ENCODE measurements at regions of chr18 and their contacts with region 1.

Region 1: GRCh38 chr18:23586249-23587196 is at the start of gene NPC1:
- DNase-seq: peak; percentile 92
- H3K4me3 Mint-ChIP-seq: peak within 1 kb of the TSS; percentile 94
- H3K27ac Mint-ChIP-seq: peak within 1 kb of the TSS; percentile 93
- H3K4me1 Mint-ChIP-seq: peaks cover 42% of the 10 kb centered on the region
- H3K27me3 Mint-ChIP-seq: peaks cover 3% of the 10 kb centered on the region
- total RNA-seq, gene NPC1: 30.1 and 30.2 TPM in 2 replicates

Region 2: DNA sequence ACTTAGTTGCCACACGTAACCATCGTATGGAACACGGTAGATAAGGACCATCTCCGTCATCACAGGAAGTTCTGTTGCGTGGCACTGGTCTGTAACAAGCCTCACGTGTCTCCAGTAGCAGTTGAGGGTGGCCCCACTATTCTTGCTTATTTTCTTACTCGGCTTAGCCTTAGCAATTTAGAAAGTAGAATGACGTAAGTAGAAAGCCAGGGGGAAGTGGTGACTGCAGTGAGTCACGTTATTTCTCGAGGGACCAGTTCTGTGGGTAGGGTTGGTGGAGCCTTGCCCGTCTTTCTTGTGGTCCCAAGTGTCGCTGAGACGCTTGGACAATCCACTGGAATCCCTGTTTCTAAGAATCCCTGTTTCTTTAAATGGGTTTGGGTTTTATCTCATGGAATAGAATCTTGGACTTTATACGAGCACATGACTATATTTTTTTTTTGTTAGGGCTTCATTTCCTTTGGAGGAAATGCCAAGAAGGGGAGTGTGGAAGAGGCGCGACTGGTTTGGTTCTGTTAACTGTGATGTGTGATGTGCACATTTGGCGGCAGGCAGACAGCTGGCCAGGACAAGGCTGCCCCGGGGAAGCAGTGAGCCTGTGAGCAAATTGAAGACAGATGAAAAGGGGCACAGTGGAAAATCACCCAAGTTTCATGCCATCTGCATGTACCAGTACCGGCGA is 355.0 kb before region 1 on chr18:
- intact Hi-C with region 1: loop called (anchors 10 kb)
- DNase-seq: peak; percentile 80
- H3K4me3 Mint-ChIP-seq: peak overlapping the region; percentile 72
- H3K27ac Mint-ChIP-seq: peak overlapping the region; percentile 89
- H3K4me1 Mint-ChIP-seq: peaks cover 64% of the 10 kb centered on the region
- H3K27me3 Mint-ChIP-seq: peaks cover 8% of the 10 kb centered on the region

Region 3: DNA sequence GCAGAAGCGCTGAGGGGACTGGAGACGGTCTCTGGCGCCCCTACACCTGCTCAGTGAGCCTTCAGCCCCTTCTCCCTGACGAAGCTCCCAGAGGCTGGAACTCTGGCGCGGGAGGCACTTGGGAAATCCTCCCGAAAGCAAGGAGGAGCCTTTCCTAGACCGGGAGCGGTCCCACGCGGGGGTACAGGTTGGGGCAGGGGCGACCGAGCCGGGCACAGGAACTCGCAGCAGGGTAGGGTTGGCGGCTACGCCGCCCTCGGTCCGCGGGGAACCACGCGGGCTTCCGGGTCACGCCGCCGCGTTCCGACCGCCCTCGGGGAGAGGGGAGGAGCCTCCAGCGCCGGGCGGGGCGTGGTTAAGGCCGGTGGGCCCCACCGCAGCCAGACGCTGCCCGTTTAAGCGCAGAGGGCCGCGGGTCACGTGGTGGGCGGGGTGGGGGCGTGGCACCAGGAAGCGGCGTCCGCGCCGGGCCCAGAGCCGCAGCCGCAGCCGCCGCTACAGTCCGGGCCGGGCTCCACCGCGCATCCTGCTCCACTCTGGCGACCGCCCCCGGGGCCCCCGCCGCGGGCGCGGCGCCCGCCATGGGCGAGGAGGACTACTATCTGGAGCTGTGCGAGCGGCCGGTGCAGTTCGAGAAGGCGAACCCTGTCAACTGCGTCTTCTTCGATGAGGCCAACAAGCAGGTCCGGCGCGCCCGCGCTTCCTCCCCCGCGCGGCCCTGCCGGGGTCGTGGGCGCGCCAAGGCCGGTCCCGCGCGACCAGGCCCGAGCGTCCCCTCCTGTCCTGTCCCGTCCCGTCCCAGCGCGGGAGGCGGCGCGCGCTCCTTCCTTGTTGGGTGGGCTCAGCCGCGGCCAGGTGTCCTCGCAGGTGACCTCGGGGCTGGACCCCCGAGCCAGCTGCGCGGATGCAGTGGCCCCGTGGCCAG is 83.2 kb before region 1 on chr18 and contains the start of gene RMC1:
- intact Hi-C with region 1: loop called (anchors 1 kb)
- DNase-seq: peak; percentile 96
- H3K4me3 Mint-ChIP-seq: peak within 1 kb of the TSS; percentile 97
- H3K27ac Mint-ChIP-seq: peak within 1 kb of the TSS; percentile 91
- H3K4me1 Mint-ChIP-seq: peaks cover 66% of the 10 kb centered on the region
- H3K27me3 Mint-ChIP-seq: no peaks in the 10 kb centered on the region
- total RNA-seq, gene RMC1: 56.3 and 56.7 TPM in 2 replicates

Region 4: GRCh38 chr18:23563377-23564043 is 23.0 kb before region 1 on chr18:
- intact Hi-C with region 1: loop called (anchors 1 kb)
- DNase-seq: no peak
- H3K4me3 Mint-ChIP-seq: no peak overlapping the region
- H3K27ac Mint-ChIP-seq: peak overlapping the region; percentile 2
- H3K4me1 Mint-ChIP-seq: peaks cover 7% of the 10 kb centered on the region
- H3K27me3 Mint-ChIP-seq: no peaks in the 10 kb centered on the region

Region 5: DNA sequence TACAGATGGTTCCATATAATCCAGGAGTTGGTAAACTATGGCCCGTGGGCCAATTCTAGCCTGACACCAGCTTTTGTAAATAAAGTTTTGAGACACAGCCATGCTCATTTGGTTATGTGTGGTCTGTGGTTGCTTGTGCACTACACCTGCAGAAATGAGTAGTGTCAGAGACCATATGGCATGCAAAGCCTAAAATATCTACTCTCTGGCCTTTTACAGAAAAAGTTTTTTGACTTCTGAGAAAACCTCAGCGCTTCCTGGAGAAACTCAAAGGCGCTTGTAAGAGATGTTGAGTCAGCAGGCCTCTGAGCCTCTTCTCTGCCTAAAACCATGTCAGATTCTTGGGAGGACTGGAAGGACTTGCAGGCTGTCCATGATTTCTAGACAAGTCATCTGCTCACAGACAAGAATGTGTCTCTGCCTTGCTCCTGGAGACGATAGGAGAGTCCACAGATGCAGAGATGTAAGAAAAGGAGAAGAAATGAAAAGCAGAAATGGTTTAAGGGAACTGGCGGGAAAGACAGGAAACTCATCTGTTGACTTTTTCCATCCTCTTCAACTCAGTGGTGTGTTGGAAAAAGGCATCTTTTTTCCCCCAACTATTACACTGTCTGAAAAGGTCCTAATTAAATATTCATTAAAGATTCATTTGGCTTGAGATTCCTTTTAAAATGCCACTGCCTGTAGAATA is 433.3 kb after region 1 on chr18:
- intact Hi-C with region 1: loop called (anchors 2 kb)
- DNase-seq: peak; percentile 71
- H3K4me3 Mint-ChIP-seq: peak overlapping the region; percentile 80
- H3K27ac Mint-ChIP-seq: peak overlapping the region; percentile 92
- H3K4me1 Mint-ChIP-seq: peaks cover 90% of the 10 kb centered on the region
- H3K27me3 Mint-ChIP-seq: no peaks in the 10 kb centered on the region